PC-9 (cell line): ENCODE measurements at regions of chr18 and their contacts with region 1.

Region 1: GRCh38 chr18:12702221-12703095 is at the starts of genes CEP76 and PSMG2:
- DNase-seq: peak; percentile 61 to 90
- H3K4me3 ChIP-seq: peak within 1 kb of the TSS; percentile 81
- H3K27ac ChIP-seq: peak within 1 kb of the TSS; percentile 92
- H3K4me1 ChIP-seq: peaks cover 31% of the 10 kb centered on the region
- H3K27me3 ChIP-seq: no peaks in the 10 kb centered on the region
- CTCF ChIP-seq: no peak
- total RNA-seq, gene CEP76: 14.5 and 15.1 TPM in 2 replicates
- total RNA-seq, gene PSMG2: 107 and 123 TPM in 2 replicates

Region 2: DNA sequence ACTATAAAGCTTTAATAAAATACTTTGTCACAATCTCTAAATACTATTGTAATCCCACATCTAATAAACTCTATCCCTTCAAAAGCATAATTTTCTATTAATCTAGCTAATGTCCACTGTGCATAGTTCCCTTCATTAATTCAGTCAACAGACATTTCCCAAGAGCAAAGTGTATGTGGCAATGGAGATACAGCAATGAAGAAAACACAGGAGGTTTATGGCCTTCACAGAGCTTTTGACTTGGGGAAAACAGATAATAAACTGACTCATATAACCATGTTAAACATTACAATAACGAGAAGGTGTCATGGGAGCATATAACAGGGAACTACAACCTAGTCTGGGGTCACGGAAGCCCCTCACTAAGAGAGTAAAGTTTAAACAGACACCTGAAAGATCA is 130.8 kb before region 1 on chr18:
- CTCF ChIA-PET with region 1: no interaction called
- POLR2A ChIA-PET with region 1: no interaction called
- intact Hi-C with region 1: no loop called
- DNase-seq: no peak
- H3K4me3 ChIP-seq: no peak overlapping the region
- H3K27ac ChIP-seq: no peak overlapping the region
- H3K4me1 ChIP-seq: 0 out of 2 replicates have a peak, but pooled peaks cover 5% of the 10 kb centered on the region
- H3K27me3 ChIP-seq: no peaks in the 10 kb centered on the region
- CTCF ChIP-seq: no peak

Region 3: GRCh38 chr18:13436576-13436975 is 734.1 kb after region 1 on chr18:
- CTCF ChIA-PET with region 1: no interaction called
- POLR2A ChIA-PET with region 1: interaction called, 12 read pairs
- intact Hi-C with region 1: no loop called
- DNase-seq: no peak
- H3K4me3 ChIP-seq: no peak overlapping the region
- H3K27ac ChIP-seq: no peak overlapping the region
- H3K4me1 ChIP-seq: no peaks in the 10 kb centered on the region
- H3K27me3 ChIP-seq: peaks cover 81% of the 10 kb centered on the region
- CTCF ChIP-seq: no peak